WTC11 (cell line): ENCODE measurements at regions of chr1 and their contacts with region 1.

Region 1: DNA sequence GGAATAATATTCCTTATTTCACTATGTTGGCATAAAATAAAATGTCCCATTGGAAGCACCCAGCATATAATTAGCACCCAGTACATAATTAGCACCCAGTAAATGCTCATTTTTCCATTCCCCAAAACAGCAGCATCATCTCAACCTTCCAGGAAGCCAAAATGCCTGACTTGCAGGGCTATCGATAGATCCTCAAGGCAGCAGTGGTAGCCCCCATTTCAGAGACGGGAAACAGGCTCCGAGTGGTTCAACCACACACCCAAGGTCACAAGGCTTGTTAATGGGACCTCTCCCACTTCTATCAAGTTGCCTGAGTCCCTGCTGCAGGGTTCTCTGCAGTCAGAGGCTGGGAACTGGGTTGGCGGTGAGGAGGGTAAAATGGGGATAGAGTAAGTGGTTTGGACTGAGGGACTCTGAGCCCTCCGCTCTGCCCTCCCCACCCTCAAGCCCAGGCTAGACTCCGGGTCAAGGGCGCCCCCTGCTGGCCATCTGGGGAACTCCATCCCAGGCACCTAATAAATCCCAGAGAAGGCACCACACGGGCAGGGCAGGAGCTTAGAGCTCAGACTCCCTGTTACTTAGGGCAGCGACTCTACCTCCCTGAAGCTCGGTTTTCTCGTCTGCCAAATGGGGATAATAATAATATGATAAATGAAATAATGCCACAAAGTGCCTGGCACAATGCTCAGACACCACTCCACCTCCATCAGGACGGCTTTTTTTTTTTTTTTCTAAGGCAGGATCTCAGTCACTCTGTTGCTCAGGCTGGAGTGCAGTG is 21.9 kb upstream of the LAPTM5 start:
- DNase-seq: peak; percentile 97
- ATAC-seq: peak; percentile 82
- H3K4me3 Mint-ChIP-seq: no peak overlapping the region
- H3K27ac Mint-ChIP-seq: no peak overlapping the region
- H3K4me1 Mint-ChIP-seq: peaks cover 10% of the 10 kb centered on the region
- H3K27me3 Mint-ChIP-seq: peaks cover 7% of the 10 kb centered on the region; the same call in 1 of the 2 replicates
- CTCF ChIP-seq: peak; percentile 100

Region 2: GRCh38 chr1:30618335-30618747 is 161.1 kb before region 1 on chr1:
- CTCF ChIA-PET with region 1: no interaction called
- POLR2A ChIA-PET with region 1: no interaction called
- DNase-seq: no peak
- ATAC-seq: no peak
- H3K4me3 Mint-ChIP-seq: no peak overlapping the region
- H3K27ac Mint-ChIP-seq: no peak overlapping the region
- H3K4me1 Mint-ChIP-seq: no peaks in the 10 kb centered on the region
- H3K27me3 Mint-ChIP-seq: peaks cover 3% of the 10 kb centered on the region
- CTCF ChIP-seq: no peak

Region 3: DNA sequence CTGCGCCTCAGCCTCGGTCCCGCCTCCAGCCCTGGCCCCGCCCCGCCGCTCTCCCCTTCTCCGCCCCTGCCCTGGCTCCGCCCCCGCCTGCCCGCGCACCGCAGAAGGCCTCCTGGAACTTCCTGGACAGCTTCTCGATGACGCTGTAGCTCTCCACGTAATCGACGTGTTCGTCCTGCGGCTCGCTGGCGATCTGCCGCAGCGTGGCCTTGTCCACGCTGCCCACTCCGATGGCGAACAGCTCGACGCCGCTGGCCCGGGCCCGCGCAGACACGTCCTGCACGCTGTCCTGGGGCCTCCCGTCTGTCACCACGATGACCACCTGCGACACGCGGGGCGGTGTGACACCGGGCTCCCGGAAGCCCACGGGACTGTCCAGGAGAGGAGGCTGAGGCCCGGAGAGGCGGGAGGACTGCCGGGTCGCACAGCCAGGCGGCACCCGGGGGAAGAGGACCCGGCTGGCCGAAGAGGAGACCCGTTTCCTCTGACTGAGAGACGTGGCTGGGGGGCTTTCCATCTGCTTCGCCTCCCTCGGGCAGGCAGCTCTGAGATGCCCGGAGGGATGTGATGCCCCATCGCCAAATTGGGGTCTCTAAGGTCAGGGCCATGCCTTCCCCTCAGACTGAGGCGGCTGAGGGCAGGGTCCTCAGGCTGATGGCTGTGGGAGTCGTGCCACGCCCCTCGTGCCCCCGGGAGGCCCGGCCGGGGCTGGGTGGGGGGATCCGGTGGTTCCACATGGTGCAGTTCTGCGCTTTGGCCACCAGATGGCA is 60.7 kb before region 1 on chr1:
- CTCF ChIA-PET with region 1: interaction called, 290 read pairs
- POLR2A ChIA-PET with region 1: interaction called, 6 read pairs
- DNase-seq: peak; percentile 92
- ATAC-seq: peak; percentile 63
- H3K4me3 Mint-ChIP-seq: peak overlapping the region; percentile 75
- H3K27ac Mint-ChIP-seq: no peak overlapping the region
- H3K4me1 Mint-ChIP-seq: peaks cover under 1% of the 10 kb centered on the region
- H3K27me3 Mint-ChIP-seq: peaks cover 4% of the 10 kb centered on the region
- CTCF ChIP-seq: peak; percentile 98

Region 4: GRCh38 chr1:30732277-30732996 is 47.0 kb before region 1 on chr1:
- CTCF ChIA-PET with region 1: interaction called, 89 read pairs
- POLR2A ChIA-PET with region 1: no interaction called
- DNase-seq: no peak
- ATAC-seq: no peak
- H3K4me3 Mint-ChIP-seq: no peak overlapping the region
- H3K27ac Mint-ChIP-seq: no peak overlapping the region
- H3K4me1 Mint-ChIP-seq: peaks cover 22% of the 10 kb centered on the region
- H3K27me3 Mint-ChIP-seq: no peaks in the 10 kb centered on the region
- CTCF ChIP-seq: no peak

Region 5: GRCh38 chr1:30756545-30757195 is 22.8 kb before region 1 on chr1:
- CTCF ChIA-PET with region 1: interaction called, 40 read pairs
- POLR2A ChIA-PET with region 1: no interaction called
- DNase-seq: no peak
- ATAC-seq: no peak; the same call in 1 of the 2 replicates
- H3K4me3 Mint-ChIP-seq: no peak overlapping the region
- H3K27ac Mint-ChIP-seq: no peak overlapping the region
- H3K4me1 Mint-ChIP-seq: peaks cover 27% of the 10 kb centered on the region
- H3K27me3 Mint-ChIP-seq: no peaks in the 10 kb centered on the region
- CTCF ChIP-seq: no peak

Region 6: DNA sequence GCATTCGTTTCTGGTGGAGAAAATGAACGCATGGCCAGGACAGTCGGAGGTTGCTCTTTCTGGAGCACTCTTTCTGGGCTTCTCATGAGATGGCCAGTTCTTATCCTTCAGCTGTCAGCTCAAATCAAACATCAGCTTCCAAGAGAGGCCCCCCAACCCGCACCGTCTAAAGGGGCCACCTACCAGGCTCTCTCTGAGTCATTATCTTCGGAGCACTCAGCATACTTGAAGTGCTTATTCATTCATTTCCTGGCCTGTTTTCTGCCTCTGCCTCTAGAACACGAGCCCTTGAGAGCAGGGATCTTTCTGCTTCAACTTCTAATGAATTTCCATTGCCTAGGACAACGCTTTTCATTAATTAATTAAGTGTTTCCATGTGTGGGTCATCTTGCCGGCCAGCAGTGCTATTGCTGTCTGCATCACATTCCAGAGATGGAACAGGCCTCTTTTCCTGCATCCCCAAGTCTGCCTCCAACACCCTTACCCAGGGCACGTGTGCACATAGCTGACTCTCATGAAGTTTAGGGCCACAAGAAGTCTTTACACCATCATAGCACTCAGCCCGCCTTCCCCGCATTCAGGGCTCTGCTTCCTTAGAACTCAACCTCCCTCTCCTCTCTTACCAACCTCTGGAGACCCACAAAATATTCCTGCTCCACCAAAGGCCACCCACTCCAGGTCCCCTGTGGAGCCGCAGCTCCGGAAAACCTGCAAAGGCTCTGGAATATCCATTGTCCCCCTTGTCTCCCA is 30.2 kb after region 1 on chr1:
- CTCF ChIA-PET with region 1: interaction called, 60 read pairs
- POLR2A ChIA-PET with region 1: no interaction called
- DNase-seq: no peak
- ATAC-seq: peak; percentile 49
- H3K4me3 Mint-ChIP-seq: no peak overlapping the region
- H3K27ac Mint-ChIP-seq: 0 out of 2 replicates have a peak overlapping the region, but pooled peaks have one; percentile 35
- H3K4me1 Mint-ChIP-seq: peaks cover 48% of the 10 kb centered on the region
- H3K27me3 Mint-ChIP-seq: no peaks in the 10 kb centered on the region
- CTCF ChIP-seq: no peak

Region 7: GRCh38 chr1:30864681-30865080 is 85.2 kb after region 1 on chr1:
- CTCF ChIA-PET with region 1: no interaction called
- POLR2A ChIA-PET with region 1: no interaction called
- DNase-seq: no peak
- ATAC-seq: no peak
- H3K4me3 Mint-ChIP-seq: no peak overlapping the region
- H3K27ac Mint-ChIP-seq: no peak overlapping the region
- H3K4me1 Mint-ChIP-seq: peaks cover 3% of the 10 kb centered on the region
- H3K27me3 Mint-ChIP-seq: no peaks in the 10 kb centered on the region
- CTCF ChIP-seq: no peak